IMR-90 (cell line): ENCODE measurements at regions of chr17 and their contacts with region 1.

Region 1: DNA sequence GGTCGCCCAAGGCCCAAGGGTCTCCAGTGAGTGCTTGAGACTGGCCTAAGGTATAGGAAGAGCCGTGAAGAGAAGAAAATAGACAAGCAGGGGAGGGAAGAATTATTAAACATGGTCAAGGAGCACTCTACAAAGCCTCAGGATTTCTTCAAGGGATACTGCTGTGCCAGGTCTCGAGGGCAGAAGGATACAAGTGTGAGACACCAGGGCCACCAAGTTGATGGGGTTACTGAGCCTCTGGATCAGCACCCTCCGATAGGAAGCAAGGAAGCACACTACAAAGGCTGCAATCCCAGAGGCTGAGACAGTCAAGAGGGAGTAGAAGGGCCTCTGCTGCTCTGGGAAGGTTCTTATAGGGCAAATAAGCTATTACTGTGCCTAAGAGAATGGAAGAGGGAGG is 6.5 kb downstream of the SUPT4H1 start:
- DNase-seq: no peak
- ATAC-seq: no peak
- H3K4me3 ChIP-seq: no peak overlapping the region
- H3K27ac ChIP-seq: no peak overlapping the region
- H3K4me1 ChIP-seq: no peaks in the 10 kb centered on the region
- H3K27me3 ChIP-seq: no peaks in the 10 kb centered on the region
- CTCF ChIP-seq: no peak
- POLR2A ChIP-seq: no peak
- RAD21 ChIP-seq: no peak

Region 2: DNA sequence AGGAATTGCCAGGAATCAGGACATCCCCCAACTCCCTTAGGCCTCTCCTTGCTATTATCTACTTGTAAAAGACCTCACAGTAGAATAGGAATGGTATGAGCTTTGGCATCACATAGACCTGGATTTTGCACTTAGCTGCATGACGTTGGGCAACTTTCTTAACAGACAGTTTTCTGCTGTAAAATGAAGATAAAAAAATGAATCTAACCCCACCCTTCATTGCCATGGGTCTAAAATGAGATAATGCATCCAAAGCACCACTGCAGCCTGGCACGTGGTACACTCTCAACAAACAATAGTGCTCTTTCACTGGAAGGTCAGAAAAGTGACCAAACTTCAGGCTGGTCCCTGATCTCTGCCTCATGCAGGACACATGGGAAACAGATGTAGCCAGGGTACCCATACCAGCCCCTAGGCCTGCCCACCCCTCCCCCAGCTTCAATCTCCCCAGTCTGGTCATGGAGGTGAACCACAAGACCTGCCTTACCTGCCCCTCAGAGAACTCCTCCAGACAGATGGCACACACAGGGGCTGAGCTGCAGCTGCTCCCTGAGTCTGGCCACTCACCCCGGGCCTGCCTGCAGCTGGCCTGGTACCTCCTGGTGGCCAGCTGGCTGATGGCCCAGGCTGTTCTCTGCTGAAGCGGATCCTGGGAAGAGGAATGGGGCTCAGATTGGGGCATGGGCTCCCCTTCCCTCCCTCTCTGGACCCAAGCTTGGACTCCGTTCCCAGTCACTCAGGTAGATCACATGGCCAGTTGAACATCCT is 15.0 kb after region 1 on chr17:
- CTCF ChIA-PET with region 1: no interaction called
- POLR2A ChIA-PET with region 1: interaction called, 10 read pairs
- dilution Hi-C with region 1: no loop called
- in situ Hi-C with region 1: no loop called
- intact Hi-C with region 1: no loop called
- DNase-seq: no peak
- ATAC-seq: no peak
- H3K4me3 ChIP-seq: no peak overlapping the region
- H3K27ac ChIP-seq: no peak overlapping the region
- H3K4me1 ChIP-seq: no peaks in the 10 kb centered on the region
- H3K27me3 ChIP-seq: peaks cover 20% of the 10 kb centered on the region
- CTCF ChIP-seq: no peak
- POLR2A ChIP-seq: no peak
- RAD21 ChIP-seq: no peak

Region 3: DNA sequence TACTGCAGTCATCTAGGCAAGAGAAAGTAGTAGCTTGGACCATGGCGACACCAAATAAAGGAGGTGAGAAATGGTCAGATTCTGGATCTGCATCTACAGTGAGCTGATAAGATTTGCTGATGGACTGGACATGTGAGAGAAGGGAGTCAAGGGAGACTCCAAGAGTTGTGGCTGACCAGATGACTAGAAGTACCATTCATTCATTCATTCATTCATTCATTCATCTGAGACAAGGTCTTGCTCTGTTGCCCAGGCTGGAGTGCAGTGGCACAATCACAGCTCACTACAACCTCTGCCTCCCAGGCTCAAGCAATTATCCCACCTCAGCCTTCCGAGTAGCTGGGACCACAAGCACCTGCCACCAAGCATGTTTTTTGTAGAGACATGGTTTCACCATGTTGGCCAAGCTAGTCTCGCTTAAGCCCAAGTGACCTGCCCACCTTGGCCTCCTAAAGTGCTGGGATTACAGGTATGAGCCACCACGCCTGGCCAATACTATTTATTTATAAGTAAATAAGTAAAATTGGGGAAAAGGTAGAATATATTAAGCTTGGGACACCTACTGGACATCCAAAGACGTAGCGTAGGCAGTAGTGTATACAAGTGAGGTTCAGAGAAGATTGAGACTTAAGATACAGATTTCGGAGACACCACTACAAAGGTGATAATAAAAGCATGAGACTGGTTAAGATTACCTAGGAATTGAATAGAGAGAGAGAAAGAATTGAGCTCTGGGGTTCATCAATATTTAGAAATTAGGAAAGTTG is 87.5 kb after region 1 on chr17:
- CTCF ChIA-PET with region 1: no interaction called
- POLR2A ChIA-PET with region 1: no interaction called
- dilution Hi-C with region 1: no loop called
- in situ Hi-C with region 1: no loop called
- intact Hi-C with region 1: no loop called
- DNase-seq: no peak
- ATAC-seq: no peak
- H3K4me3 ChIP-seq: no peak overlapping the region
- H3K27ac ChIP-seq: no peak overlapping the region
- H3K4me1 ChIP-seq: no peaks in the 10 kb centered on the region
- H3K27me3 ChIP-seq: no peaks in the 10 kb centered on the region
- CTCF ChIP-seq: no peak
- POLR2A ChIP-seq: no peak
- RAD21 ChIP-seq: no peak

Region 4: GRCh38 chr17:59651346-59651745 is 1305.8 kb after region 1 on chr17:
- CTCF ChIA-PET with region 1: no interaction called
- POLR2A ChIA-PET with region 1: no interaction called
- dilution Hi-C with region 1: no loop called
- in situ Hi-C with region 1: no loop called
- intact Hi-C with region 1: no loop called
- DNase-seq: peak; percentile 11
- ATAC-seq: no peak
- H3K4me3 ChIP-seq: no peak overlapping the region
- H3K27ac ChIP-seq: no peak overlapping the region
- H3K4me1 ChIP-seq: peaks cover 5% of the 10 kb centered on the region; the same call in 1 of the 2 replicates
- H3K27me3 ChIP-seq: no peaks in the 10 kb centered on the region
- CTCF ChIP-seq: no peak
- POLR2A ChIP-seq: no peak
- RAD21 ChIP-seq: no peak